Caco-2 (cell line): ENCODE measurements at regions of chr13 and their contacts with region 1.

Region 1: GRCh38 chr13:106536244-106537034 is 977 bp upstream of the EFNB2 start:
- DNase-seq: peak; percentile 88 to 93
- H3K4me3 ChIP-seq: peak overlapping the region; percentile 93
- H3K4me3 Mint-ChIP-seq: peak overlapping the region; percentile 97
- H3K27ac Mint-ChIP-seq: peak overlapping the region; percentile 94
- H3K4me1 ChIP-seq: peaks cover 7% of the 10 kb centered on the region
- H3K4me1 Mint-ChIP-seq: peaks cover 7% of the 10 kb centered on the region
- H3K27me3 ChIP-seq: no peaks in the 10 kb centered on the region
- H3K27me3 Mint-ChIP-seq: no peaks in the 10 kb centered on the region
- CTCF ChIP-seq: peak; percentile 93 to 98

Region 2: DNA sequence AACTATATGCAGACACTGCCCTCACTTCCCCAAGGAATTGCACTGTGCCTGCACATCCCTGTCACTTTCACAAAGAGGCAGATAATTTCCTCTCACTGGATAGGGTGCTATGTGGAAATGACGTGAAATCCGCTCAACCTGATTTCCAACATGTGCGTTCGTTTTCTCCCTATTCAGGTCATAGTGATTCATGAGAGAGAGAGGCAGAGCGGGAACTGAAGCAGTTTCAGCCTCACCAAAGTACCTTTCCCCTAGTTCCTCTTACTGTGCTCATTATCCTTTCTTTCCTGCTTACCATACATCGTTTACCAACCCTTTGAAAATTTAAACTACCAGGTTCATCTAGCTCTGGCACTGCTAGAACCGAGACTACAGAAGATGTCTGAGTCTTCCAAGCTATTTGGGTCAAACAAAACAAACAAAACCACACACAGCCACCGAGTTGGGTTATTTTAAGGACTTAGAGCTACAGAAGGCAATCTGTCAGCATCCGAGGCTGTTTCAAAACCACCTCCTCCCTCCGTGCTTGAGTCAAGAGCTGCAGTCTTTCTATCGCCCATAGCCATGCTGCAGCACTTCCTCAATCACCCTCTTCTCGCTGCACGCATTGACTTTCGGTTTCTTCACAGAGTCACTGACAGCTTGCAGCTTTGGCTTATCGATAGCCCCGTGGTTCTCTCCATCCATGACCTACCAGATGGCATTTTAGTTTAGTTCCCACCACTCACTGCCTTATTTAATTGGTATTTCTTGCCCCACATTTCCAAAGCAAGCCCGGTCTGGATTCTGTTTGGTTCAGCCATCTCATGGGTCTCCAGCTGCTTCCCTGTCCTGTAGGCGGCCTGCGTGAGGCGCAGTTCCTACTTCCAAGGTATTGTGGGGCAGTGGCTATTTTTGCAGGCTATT is 1396.8 kb before region 1 on chr13:
- CTCF ChIA-PET with region 1: no interaction called
- POLR2A ChIA-PET with region 1: no interaction called
- intact Hi-C with region 1: loop called (anchors 10 kb)
- DNase-seq: peak; percentile 34 to 45
- H3K4me3 ChIP-seq: peak overlapping the region; percentile 41
- H3K4me3 Mint-ChIP-seq: peak overlapping the region; percentile 79
- H3K27ac Mint-ChIP-seq: no peak overlapping the region
- H3K4me1 ChIP-seq: no peaks in the 10 kb centered on the region
- H3K4me1 Mint-ChIP-seq: no peaks in the 10 kb centered on the region
- H3K27me3 ChIP-seq: no peaks in the 10 kb centered on the region
- H3K27me3 Mint-ChIP-seq: no peaks in the 10 kb centered on the region
- CTCF ChIP-seq: peak in 1 of 2 experiments; percentile 67

Region 3: GRCh38 chr13:105773863-105774538 is 762.4 kb before region 1 on chr13:
- CTCF ChIA-PET with region 1: no interaction called
- POLR2A ChIA-PET with region 1: no interaction called
- intact Hi-C with region 1: loop called (anchors 5 kb)
- DNase-seq: peak; percentile 8 to 38
- H3K4me3 ChIP-seq: no peak overlapping the region
- H3K4me3 Mint-ChIP-seq: peak overlapping the region; percentile 44
- H3K27ac Mint-ChIP-seq: peak overlapping the region; percentile 39
- H3K4me1 ChIP-seq: peaks cover 38% of the 10 kb centered on the region
- H3K4me1 Mint-ChIP-seq: peaks cover 33% of the 10 kb centered on the region
- H3K27me3 ChIP-seq: no peaks in the 10 kb centered on the region
- H3K27me3 Mint-ChIP-seq: no peaks in the 10 kb centered on the region
- CTCF ChIP-seq: no peak

Region 4: DNA sequence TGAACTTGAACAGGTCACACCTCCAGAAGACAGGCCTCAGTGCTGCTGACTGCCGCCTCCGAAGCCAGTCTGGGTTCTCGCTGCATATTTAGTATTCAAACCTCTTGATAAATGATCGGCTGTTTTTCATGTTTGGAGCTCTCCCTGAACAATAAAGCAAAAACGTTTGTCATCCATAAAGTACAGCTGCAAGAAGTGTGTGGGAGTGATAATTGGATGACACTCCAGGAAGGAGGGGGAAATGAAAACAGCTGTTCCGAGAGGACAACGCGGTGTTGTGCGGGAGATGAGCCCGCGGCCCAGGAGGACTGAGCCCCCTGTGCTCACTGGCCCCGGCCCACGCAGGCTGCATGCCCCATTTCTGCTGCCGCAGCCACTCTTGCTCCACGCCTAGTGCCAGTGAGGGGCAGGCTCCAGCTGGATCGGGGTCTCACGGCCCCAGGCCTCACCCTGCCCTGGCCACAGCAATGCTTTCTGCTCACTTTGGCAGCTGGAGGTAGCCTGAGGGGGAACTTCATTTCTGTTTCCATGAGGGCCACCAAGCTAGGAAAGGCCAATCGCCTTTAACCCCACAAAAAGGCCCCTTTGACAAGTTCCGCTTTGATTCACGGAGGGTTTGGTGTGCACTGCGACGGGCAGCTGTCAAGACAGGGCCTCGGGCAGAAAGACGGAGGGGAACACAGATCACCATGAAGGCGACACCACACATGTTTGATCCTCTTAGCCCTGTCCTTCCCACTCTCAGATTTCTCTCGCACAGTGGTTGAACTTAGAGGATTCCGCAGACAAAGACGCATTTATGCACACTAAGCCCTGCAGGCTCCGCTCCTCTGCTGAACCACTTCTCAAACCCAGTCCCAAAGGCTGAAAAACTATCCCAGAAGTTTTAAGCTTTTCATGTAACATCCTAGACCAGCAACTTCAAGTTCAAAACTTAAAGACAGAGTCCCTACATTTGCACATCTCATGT is 538.6 kb before region 1 on chr13:
- CTCF ChIA-PET with region 1: no interaction called
- POLR2A ChIA-PET with region 1: no interaction called
- intact Hi-C with region 1: no loop called
- DNase-seq: peak in 1 of 2 experiments; percentile 31
- H3K4me3 ChIP-seq: no peak overlapping the region
- H3K4me3 Mint-ChIP-seq: no peak overlapping the region
- H3K27ac Mint-ChIP-seq: no peak overlapping the region
- H3K4me1 ChIP-seq: no peaks in the 10 kb centered on the region
- H3K4me1 Mint-ChIP-seq: peaks cover 18% of the 10 kb centered on the region
- H3K27me3 ChIP-seq: no peaks in the 10 kb centered on the region
- H3K27me3 Mint-ChIP-seq: no peaks in the 10 kb centered on the region
- CTCF ChIP-seq: no peak

Region 5: GRCh38 chr13:106241974-106242953 is 294.2 kb before region 1 on chr13:
- CTCF ChIA-PET with region 1: no interaction called
- POLR2A ChIA-PET with region 1: no interaction called
- intact Hi-C with region 1: loop called (anchors 2 kb)
- DNase-seq: peak; percentile 63 to 72
- H3K4me3 ChIP-seq: no peak overlapping the region; the same call in 1 of the 2 replicates
- H3K4me3 Mint-ChIP-seq: peak overlapping the region; percentile 69
- H3K27ac Mint-ChIP-seq: peak overlapping the region; percentile 91
- H3K4me1 ChIP-seq: peaks cover 30% of the 10 kb centered on the region
- H3K4me1 Mint-ChIP-seq: peaks cover 31% of the 10 kb centered on the region
- H3K27me3 ChIP-seq: no peaks in the 10 kb centered on the region
- H3K27me3 Mint-ChIP-seq: no peaks in the 10 kb centered on the region
- CTCF ChIP-seq: no peak

Region 6: DNA sequence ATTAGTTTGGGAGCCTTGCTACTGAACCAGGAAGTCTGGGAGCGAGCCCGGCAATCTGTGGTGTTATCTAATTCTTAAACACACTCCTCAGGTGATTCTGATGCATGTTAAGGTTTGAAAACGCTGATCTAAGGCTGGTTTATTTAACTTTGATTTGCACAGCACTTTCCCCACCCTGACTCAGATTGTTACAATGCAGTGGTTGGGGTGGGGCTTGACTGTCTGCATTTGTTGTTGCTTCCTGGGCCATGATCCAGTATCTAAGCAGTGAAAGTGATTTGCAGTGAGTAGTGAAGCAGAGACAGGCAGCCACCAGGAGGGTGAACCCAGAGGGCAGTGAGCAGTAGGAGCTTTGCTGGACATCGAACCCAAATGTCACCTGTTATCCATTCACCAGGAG is 113.1 kb after region 1 on chr13:
- CTCF ChIA-PET with region 1: no interaction called
- POLR2A ChIA-PET with region 1: no interaction called
- intact Hi-C with region 1: no loop called
- DNase-seq: no peak
- H3K4me3 ChIP-seq: no peak overlapping the region
- H3K4me3 Mint-ChIP-seq: no peak overlapping the region
- H3K27ac Mint-ChIP-seq: no peak overlapping the region
- H3K4me1 ChIP-seq: no peaks in the 10 kb centered on the region
- H3K4me1 Mint-ChIP-seq: no peaks in the 10 kb centered on the region
- H3K27me3 ChIP-seq: no peaks in the 10 kb centered on the region
- H3K27me3 Mint-ChIP-seq: no peaks in the 10 kb centered on the region
- CTCF ChIP-seq: no peak

Region 7: DNA sequence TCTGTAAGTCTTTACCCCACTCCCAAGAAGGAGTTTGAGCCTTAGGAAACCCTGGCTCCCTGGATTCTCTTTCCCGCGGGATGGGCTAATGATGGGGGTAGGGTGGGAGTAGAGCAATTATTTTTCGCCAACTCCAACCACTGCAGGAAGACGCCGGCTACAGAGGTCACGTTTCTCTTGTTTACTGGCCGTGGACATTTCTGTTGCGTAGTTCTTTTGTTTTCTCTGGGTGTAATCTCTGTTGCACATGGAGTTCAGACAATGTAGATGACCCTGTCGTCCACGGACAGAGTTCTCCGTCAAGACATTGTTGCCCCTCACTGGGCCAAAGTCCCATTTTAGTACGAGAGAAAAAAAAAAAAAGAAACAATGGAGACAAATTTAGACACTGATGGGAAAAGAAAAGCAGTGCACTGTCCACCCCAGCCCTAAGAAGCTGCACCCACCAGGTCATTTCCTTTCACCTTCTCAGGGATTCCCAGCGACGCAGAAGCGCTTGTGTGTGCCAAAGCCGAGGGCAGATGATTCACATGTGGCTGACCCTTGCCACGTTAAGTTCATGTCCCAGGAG is 165.4 kb after region 1 on chr13:
- CTCF ChIA-PET with region 1: no interaction called
- POLR2A ChIA-PET with region 1: no interaction called
- intact Hi-C with region 1: no loop called
- DNase-seq: no peak
- H3K4me3 ChIP-seq: no peak overlapping the region
- H3K4me3 Mint-ChIP-seq: no peak overlapping the region
- H3K27ac Mint-ChIP-seq: no peak overlapping the region
- H3K4me1 ChIP-seq: peaks cover 21% of the 10 kb centered on the region; the same call in 1 of the 2 replicates
- H3K4me1 Mint-ChIP-seq: peaks cover 15% of the 10 kb centered on the region
- H3K27me3 ChIP-seq: no peaks in the 10 kb centered on the region
- H3K27me3 Mint-ChIP-seq: no peaks in the 10 kb centered on the region
- CTCF ChIP-seq: no peak

Region 8: DNA sequence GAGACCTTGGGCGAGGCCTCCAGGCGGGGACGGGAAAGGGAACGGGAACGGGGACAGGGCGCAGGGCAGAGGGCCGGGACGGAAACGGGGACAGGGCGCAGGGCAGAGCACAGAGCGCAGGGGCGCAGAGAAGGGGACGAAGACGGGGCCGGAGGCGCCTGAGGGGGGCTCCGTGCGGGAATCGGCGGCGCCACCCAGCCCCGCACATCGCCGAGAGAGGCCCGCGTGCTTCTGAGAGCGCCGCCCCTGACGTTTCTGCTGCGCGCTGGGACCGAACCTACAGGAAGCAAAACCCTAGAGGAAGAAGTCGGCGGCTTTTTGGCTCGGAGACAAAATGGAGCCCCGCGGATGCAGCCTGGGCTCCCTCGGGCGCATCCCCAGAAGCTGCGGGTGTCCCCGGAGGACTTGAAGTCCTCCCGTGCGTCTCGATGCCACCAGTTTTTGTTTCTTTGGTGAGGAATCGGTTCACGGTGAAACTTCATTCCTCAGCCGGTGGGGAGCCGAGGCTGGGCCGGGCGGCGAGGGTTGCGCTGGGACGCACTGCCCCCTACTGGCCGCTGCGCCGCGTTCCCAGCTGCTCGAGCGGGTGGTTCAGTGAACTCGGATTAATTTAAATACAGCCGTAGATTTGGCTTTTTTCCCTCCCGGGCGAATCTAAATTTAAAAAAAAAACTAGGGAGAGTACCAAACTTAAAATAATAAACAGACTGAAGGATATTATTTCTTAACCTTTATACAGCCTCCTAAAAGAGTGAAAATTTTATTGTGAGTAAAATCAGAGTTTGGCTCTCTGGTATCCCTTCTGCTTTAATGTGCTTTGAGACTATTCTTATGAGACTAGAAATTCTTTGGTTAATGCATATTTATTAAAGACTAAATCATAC is 381.5 kb after region 1 on chr13:
- CTCF ChIA-PET with region 1: interaction called, 5 read pairs
- POLR2A ChIA-PET with region 1: no interaction called
- intact Hi-C with region 1: loop called (anchors 1 kb)
- DNase-seq: peak; percentile 77 to 91
- H3K4me3 ChIP-seq: peak overlapping the region; percentile 44
- H3K4me3 Mint-ChIP-seq: peak overlapping the region; percentile 74
- H3K27ac Mint-ChIP-seq: peak overlapping the region; percentile 92
- H3K4me1 ChIP-seq: peaks cover 25% of the 10 kb centered on the region
- H3K4me1 Mint-ChIP-seq: peaks cover 34% of the 10 kb centered on the region
- H3K27me3 ChIP-seq: no peaks in the 10 kb centered on the region
- H3K27me3 Mint-ChIP-seq: no peaks in the 10 kb centered on the region
- CTCF ChIP-seq: peak; percentile 96